GM12878 (cell line): ENCODE measurements at regions of chr15 and their contacts with region 1.

Region 1: DNA sequence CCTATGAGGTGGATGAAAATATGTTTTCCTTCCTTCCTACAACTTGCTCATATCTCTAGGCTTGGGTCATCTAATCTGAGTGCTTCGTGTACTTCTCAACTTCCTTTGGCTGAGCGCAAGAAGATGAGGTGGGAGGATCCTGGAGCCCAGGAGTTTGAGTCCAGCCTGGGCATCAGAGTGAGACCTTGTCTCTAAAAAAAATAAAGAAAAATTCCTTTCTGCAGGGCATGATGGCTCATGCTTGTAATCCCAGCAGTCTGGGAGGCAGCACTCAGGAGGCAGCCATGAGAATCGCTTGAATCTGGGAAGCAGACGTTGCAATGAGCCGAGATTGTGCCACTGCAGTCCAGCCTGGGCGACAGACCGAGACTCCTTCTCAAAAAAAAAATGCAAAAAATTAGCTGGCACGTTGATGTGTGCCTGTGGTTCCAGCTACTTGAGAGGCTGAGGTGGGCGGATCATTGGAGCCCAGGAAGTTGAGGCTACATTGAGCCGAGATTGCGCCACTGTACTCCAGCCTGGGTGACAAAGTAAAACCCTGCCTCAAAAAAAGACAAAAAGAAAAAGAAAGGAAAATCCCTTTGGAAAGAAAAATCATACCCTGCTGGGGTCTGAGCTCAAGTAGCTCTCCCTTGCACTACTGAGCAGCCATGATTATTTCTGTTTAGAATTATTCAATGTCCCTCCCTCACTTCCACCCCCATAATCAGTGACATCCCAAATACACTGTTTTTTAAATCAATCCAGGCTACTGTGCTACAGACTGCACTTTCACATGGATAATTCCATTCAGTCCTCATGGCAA is 28.0 kb upstream of the RAB11A start:
- DNase-seq: no peak
- ATAC-seq: no peak
- H3K4me3 ChIP-seq: no peak overlapping the region
- H3K27ac ChIP-seq: no peak overlapping the region
- H3K4me1 ChIP-seq: 0 out of 2 replicates have a peak, but pooled peaks cover 3% of the 10 kb centered on the region
- H3K27me3 ChIP-seq: no peaks in the 10 kb centered on the region
- CTCF ChIP-seq: no peak
- EP300 ChIP-seq: no peak
- POLR2A ChIP-seq: no peak
- RAD21 ChIP-seq: no peak

Region 2: DNA sequence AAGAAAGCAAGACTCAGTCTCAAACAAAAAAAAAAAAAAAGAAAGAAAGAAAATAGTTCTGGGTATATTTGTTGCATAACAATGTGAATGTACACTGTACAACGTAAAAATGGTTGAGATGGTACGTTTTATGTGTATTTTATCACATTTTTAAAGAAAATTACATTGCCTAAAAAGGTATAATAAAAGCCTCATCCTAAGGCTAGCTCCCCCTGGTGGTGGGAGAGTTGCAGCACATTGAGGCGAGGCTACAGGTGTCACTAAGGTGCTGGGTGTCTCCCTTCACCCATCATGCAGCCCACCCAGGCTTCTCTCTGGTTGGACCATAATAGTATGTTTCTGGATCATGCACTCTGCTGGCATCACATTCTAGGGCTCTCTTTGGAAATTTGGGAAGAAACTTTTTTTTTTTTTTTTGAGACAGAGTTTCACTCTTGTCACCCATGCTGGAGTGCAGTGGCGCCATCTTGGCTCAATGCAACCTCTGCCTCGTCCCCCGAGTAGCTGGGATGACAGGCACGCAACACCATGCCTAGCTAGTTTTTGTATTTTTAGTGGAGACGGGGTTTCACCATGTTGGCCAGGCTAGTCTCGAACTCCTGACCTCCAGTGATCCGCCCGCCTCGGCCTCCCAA is 15.6 kb after region 1 on chr15:
- CTCF ChIA-PET with region 1: interaction called, 61 read pairs
- POLR2A ChIA-PET with region 1: interaction called, 8 read pairs
- RAD21 ChIA-PET with region 1: interaction called, 15 read pairs
- SMC1A ChIA-PET with region 1: interaction called, 19 read pairs
- in situ Hi-C with region 1: no loop called
- intact Hi-C with region 1: no loop called
- DNase-seq: no peak
- ATAC-seq: peak; percentile 89
- H3K4me3 ChIP-seq: no peak overlapping the region
- H3K27ac ChIP-seq: no peak overlapping the region
- H3K4me1 ChIP-seq: peaks cover 19% of the 10 kb centered on the region
- H3K27me3 ChIP-seq: no peaks in the 10 kb centered on the region
- CTCF ChIP-seq: peak; percentile 74 to 91 (median 88)
- EP300 ChIP-seq: no peak
- POLR2A ChIP-seq: no peak
- RAD21 ChIP-seq: peak; percentile 51

Region 3: DNA sequence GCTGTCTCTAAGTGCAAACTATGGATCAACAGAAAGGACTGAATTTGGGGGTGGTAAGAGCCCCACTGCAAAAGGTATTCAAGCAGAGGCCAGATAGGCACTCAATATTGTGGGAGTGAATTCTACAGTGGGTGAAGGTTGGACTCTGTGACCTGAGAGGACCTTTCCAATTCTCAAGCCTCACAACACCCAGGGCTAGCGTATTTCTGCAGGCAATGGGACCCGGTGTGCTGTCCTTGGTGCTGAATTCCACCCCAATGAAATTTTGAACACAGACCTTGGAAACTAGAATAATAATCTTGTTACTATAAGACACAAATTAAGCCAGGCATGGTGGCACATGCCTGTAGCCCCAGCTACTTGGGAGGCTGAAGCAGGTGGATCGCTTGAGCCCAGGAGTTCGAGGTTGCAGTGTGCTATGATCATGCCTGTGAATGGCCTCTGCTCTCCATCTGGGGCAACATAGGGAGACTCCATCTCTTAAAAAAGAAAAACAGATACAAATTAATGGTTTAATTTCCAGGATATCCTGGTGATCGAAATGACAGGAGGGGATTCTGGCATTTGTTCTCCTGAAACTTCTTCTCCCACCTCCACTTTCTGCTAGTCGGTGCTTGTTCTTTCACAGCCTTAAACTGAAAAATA is 163.4 kb after region 1 on chr15:
- CTCF ChIA-PET with region 1: no interaction called
- POLR2A ChIA-PET with region 1: no interaction called
- RAD21 ChIA-PET with region 1: no interaction called
- SMC1A ChIA-PET with region 1: no interaction called
- in situ Hi-C with region 1: no loop called
- intact Hi-C with region 1: no loop called
- DNase-seq: no peak
- ATAC-seq: no peak
- H3K4me3 ChIP-seq: no peak overlapping the region
- H3K27ac ChIP-seq: no peak overlapping the region
- H3K4me1 ChIP-seq: no peaks in the 10 kb centered on the region
- H3K27me3 ChIP-seq: 0 out of 4 replicates have a peak, but pooled peaks cover 0 to 1% of the 10 kb centered on the region in 2 experiments
- CTCF ChIP-seq: no peak
- EP300 ChIP-seq: no peak
- POLR2A ChIP-seq: no peak
- RAD21 ChIP-seq: no peak